Vagina (tissue), 2 donors: ENCODE measurements at regions of chr17 and their contacts with region 1.

Region 1: GRCh38 chr17:39186481-39187002 is 10.9 kb downstream of the CACNB1 start:
- DNase-seq: no peak
- H3K4me3 ChIP-seq: no peak overlapping the region
- H3K27ac ChIP-seq: no peak overlapping the region
- H3K4me1 ChIP-seq: no peaks in the 10 kb centered on the region
- H3K27me3 ChIP-seq: no peaks in the 10 kb centered on the region
- CTCF ChIP-seq: no peak
- POLR2A ChIP-seq: no peak

Region 2: DNA sequence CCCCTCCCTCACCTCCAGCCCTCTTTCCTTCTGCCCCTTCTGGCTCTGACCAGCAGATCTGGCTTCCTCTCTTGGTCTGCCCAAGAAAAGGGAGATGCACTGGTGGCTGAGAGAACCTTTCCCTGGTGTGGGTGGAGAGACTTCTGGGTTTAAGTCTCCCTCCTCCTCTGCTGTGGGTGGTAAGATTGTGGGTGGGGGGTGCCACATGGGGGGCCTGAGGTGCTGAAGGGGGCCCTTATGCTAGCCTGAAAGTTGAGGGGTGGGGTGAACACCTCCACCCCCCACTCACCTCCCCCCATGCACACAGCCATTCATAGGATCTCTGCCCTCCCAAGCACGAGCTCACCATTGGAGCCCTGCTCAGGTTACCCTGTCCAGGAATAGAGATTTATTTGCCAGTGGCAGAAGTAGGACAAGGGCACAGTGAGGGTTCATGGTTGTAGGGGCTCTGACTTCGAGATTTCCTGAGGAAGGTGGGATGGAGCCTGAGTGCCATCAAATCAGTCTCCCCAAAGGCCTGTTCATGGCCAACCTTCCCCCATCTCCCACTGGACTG is 40.9 kb after region 1 on chr17:
- intact Hi-C with region 1: loop called (anchors 1 kb)
- DNase-seq: no peak
- H3K4me3 ChIP-seq: no peak overlapping the region
- H3K27ac ChIP-seq: no peak overlapping the region
- H3K4me1 ChIP-seq: peaks cover 35% of the 10 kb centered on the region
- H3K27me3 ChIP-seq: no peaks in the 10 kb centered on the region
- CTCF ChIP-seq: no peak
- POLR2A ChIP-seq: no peak

Region 3: DNA sequence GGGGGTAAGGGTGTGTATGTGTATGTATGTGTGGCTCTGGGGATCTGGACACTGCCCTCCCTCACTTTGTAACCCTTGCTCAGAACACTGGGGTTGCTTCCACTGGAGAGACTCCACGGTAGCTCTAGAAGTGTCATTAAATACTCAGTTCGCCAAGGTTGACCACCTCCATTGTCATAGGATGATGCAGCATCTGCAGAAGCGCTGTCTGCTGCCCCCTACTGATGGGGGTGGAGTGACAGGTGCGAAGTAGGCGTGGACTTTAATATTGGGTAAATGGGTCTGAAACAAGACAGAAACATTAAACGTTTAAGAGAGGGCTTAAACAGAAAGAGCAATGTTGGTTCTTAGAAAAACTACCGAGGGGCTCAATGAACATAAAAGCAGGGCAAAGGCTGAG is 74.7 kb after region 1 on chr17:
- intact Hi-C with region 1: no loop called
- DNase-seq: no peak
- H3K4me3 ChIP-seq: no peak overlapping the region
- H3K27ac ChIP-seq: no peak overlapping the region
- H3K4me1 ChIP-seq: no peaks in the 10 kb centered on the region
- H3K27me3 ChIP-seq: no peaks in the 10 kb centered on the region
- CTCF ChIP-seq: no peak
- POLR2A ChIP-seq: no peak